Mammary epithelial cell (primary cell): ENCODE measurements at regions of chr17 and their contacts with region 1.

Region 1: DNA sequence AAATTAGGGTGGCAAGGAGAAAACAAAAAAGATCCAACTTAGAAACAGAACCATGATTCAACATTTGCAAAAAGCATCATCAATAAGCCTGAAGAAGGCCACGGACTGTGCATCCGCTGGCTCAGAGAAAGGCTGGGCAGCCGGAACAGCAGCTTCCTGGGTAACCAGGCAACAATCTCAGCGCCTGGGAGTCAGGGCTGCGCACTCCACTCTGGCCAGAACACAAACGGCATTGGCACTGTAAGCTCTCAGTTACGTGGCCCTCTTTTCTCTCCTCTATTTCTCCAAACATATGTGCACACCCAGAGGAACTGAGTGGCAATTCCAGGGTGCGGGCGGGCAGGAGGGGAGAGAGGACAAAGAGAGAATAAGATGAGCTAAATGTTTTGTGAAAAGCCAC is 6.4 kb upstream of the GHDC start:
- DNase-seq: no peak
- H3K4me3 ChIP-seq: no peak overlapping the region
- H3K27ac ChIP-seq: no peak overlapping the region
- H3K4me1 ChIP-seq: no peaks in the 10 kb centered on the region
- H3K27me3 ChIP-seq: no peaks in the 10 kb centered on the region
- CTCF ChIP-seq: no peak

Region 2: GRCh38 chr17:42132941-42133340 is 67.8 kb before region 1 on chr17:
- CTCF ChIA-PET with region 1: no interaction called
- dilution Hi-C with region 1: loop called (anchors 5 kb)
- in situ Hi-C with region 1: no loop called
- intact Hi-C with region 1: no loop called
- DNase-seq: peak; percentile 83
- H3K4me3 ChIP-seq: no peak overlapping the region
- H3K27ac ChIP-seq: no peak overlapping the region
- H3K4me1 ChIP-seq: peaks cover 20% of the 10 kb centered on the region
- H3K27me3 ChIP-seq: no peaks in the 10 kb centered on the region
- CTCF ChIP-seq: no peak

Region 3: GRCh38 chr17:42163113-42163512 is 37.6 kb before region 1 on chr17:
- CTCF ChIA-PET with region 1: no interaction called
- dilution Hi-C with region 1: no loop called
- in situ Hi-C with region 1: no loop called
- intact Hi-C with region 1: no loop called
- DNase-seq: no peak
- H3K4me3 ChIP-seq: no peak overlapping the region
- H3K27ac ChIP-seq: no peak overlapping the region
- H3K4me1 ChIP-seq: no peaks in the 10 kb centered on the region
- H3K27me3 ChIP-seq: no peaks in the 10 kb centered on the region
- CTCF ChIP-seq: peak; percentile 16 to 38

Region 4: GRCh38 chr17:42183741-42184711 is 16.7 kb before region 1 on chr17:
- CTCF ChIA-PET with region 1: no interaction called
- dilution Hi-C with region 1: no loop called
- in situ Hi-C with region 1: no loop called
- intact Hi-C with region 1: no loop called
- DNase-seq: peak; percentile 12
- H3K4me3 ChIP-seq: peak overlapping the region in 2 of 3 experiments; percentile 35 to 39
- H3K27ac ChIP-seq: no peak overlapping the region
- H3K4me1 ChIP-seq: peaks cover 21% of the 10 kb centered on the region
- H3K27me3 ChIP-seq: peaks cover 12% of the 10 kb centered on the region
- CTCF ChIP-seq: peak; percentile 39 to 47

Region 5: DNA sequence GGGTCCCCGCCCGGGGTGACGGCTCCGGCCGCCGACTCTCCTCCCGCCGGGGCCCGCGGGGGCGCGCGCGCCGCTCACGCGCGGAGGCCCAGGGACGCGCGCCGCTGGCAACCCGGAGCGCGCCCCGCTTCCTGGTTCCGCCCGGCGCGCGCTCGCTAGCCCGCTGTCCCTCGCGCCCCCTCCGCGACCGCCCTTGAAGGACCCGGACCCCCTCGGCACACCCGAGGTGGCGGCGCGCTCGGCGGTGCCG is 75.6 kb after region 1 on chr17 and contains the start of gene STAT5B:
- CTCF ChIA-PET with region 1: no interaction called
- dilution Hi-C with region 1: loop called (anchors 10 kb)
- in situ Hi-C with region 1: no loop called
- intact Hi-C with region 1: no loop called
- DNase-seq: peak; percentile 61
- H3K4me3 ChIP-seq: peak within 1 kb of the TSS; percentile 77 to 91 (median 78)
- H3K27ac ChIP-seq: no peak within 1 kb of the TSS
- H3K4me1 ChIP-seq: peaks cover 15% of the 10 kb centered on the region
- H3K27me3 ChIP-seq: no peaks in the 10 kb centered on the region
- CTCF ChIP-seq: no peak
- total RNA-seq, gene STAT5B: 20.0 to 20.5 TPM

Region 6: DNA sequence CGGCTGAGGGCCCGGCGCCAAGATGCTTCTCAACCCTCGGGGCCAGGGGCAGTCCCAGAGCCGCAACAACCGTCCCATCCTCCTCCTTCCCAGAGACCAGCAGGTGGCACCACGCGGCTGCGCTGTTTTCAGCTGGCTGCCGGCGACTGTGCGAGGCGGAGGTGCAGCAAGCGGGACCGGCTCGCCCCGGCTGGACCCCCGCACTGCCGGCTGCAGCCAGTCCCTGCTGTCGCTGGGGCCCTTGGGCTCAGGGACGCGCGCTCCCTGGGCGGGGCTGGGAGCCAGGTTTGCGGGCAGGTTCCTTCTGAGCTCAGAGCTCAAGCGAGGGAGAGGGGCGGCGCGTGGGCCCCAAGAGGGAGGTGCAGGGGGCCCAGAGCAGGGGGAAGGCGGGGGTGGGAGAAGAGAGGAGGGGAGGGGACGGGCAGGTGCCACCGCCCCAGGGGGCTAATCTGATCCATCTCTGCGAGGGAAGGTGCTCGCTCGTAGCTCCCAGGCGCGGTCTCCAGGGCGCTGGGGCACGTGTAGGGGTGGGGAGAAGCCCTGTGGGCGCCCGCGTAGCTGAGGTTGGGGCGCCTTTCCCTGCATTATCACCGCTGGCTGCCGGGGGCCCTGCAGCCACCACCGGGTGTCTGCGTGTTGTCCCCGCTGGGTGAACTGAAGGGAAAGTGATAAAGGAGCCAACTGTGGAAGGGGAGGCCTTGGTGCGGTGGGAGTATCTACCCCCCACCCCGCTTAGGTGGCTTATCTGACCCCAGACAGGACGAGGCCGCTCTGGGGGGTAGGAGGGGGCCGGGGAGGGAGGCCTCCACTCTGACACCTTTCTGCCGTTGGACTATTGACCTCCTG is 111.8 kb after region 1 on chr17:
- CTCF ChIA-PET with region 1: no interaction called
- dilution Hi-C with region 1: loop called (anchors 5 kb)
- in situ Hi-C with region 1: no loop called
- intact Hi-C with region 1: no loop called
- DNase-seq: peak; percentile 48
- H3K4me3 ChIP-seq: no peak overlapping the region
- H3K27ac ChIP-seq: no peak overlapping the region
- H3K4me1 ChIP-seq: peaks cover 13% of the 10 kb centered on the region
- H3K27me3 ChIP-seq: no peaks in the 10 kb centered on the region
- CTCF ChIP-seq: peak; percentile 40 to 78